ENCODE measurements at regions of chr12 and their contacts with region 1.

Region 1: GRCh38 chr12:56104109-56104814 is at the start of gene PA2G4:
- DNase-seq: peak; percentile 98
- ATAC-seq: peak; percentile 95 to 96
- H3K4me3 ChIP-seq: peak within 1 kb of the TSS; percentile 77 to 98 (median 84)
- H3K27ac ChIP-seq: peak within 1 kb of the TSS; percentile 85 to 93 (median 92)
- H3K4me1 ChIP-seq: peaks cover 20 to 26% of the 10 kb centered on the region in 2 donors
- H3K27me3 ChIP-seq: no peaks in the 10 kb centered on the region
- CTCF ChIP-seq: no peak
- POLR2A ChIP-seq: peak; percentile 85 to 96
- total RNA-seq, gene PA2G4: 109 to 204 (median 127) TPM

Region 2: GRCh38 chr12:56041552-56042429 is 62.5 kb before region 1 on chr12 and contains the start of gene RPS26:
- in situ Hi-C with region 1: loop called in 2 of 4 experiments (anchors 10 kb)
- intact Hi-C with region 1: loop called (anchors 2 kb)
- DNase-seq: peak; percentile 96 to 97
- ATAC-seq: peak; percentile 98 to 99
- H3K4me3 ChIP-seq: peak within 1 kb of the TSS; percentile 66 to 94 (median 86)
- H3K27ac ChIP-seq: peak within 1 kb of the TSS; percentile 87 to 98 (median 94)
- H3K4me1 ChIP-seq: peaks cover 15 to 19% of the 10 kb centered on the region in 2 donors
- H3K27me3 ChIP-seq: no peaks in the 10 kb centered on the region
- CTCF ChIP-seq: peak; percentile 11 to 70 (median 40)
- POLR2A ChIP-seq: peak; percentile 86 to 90
- total RNA-seq, gene RPS26: 618 to 1,648 (median 1,209) TPM

Region 3: DNA sequence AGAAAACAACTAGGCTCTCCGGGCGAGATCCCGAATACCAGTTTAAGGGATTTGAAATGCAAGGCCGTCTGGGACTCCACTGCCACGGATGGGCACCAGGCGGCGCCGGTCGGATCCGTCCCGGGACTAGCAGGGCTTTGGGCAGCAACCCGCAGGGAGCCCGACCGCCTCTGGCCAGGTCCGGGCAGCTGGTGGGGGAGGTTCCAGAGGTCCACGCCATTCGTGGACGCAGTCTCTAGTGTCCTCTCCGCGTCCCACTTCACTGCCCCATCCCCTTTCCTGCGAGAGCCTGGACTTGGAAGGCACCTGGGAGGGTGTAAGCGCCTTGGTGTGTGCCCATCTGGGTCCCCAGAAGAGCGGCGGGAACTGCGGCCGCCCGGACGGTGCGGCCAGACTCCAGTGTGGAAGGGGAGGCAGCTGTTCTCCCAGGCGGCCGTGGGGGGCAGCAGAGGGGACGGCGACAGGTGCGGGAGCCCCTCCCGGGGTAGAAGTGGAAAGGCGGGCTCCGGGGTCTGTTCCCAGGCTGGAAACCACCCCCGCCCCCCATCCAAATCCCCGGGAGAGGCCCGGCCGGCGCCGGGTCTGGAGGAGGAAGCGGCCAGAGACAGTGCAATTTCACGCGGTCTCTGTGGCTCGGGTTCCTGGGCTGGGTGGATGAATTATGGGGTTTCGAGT is 25.1 kb before region 1 on chr12:
- in situ Hi-C with region 1: no loop called
- intact Hi-C with region 1: loop called (anchors 2 kb)
- DNase-seq: peak; percentile 55 to 79
- ATAC-seq: peak; percentile 76 to 86
- H3K4me3 ChIP-seq: peak overlapping the region; percentile 54 to 62 (median 58)
- H3K27ac ChIP-seq: peak overlapping the region; percentile 21 to 59 (median 39)
- H3K4me1 ChIP-seq: peaks cover 3 to 19% of the 10 kb centered on the region in 2 donors
- H3K27me3 ChIP-seq: peaks cover 10 to 24% (median 12%) of the 10 kb centered on the region in 3 donors
- CTCF ChIP-seq: peak; percentile 53 to 74 (median 64)
- POLR2A ChIP-seq: peak in 1 of 2 donors; percentile 23

Region 4: DNA sequence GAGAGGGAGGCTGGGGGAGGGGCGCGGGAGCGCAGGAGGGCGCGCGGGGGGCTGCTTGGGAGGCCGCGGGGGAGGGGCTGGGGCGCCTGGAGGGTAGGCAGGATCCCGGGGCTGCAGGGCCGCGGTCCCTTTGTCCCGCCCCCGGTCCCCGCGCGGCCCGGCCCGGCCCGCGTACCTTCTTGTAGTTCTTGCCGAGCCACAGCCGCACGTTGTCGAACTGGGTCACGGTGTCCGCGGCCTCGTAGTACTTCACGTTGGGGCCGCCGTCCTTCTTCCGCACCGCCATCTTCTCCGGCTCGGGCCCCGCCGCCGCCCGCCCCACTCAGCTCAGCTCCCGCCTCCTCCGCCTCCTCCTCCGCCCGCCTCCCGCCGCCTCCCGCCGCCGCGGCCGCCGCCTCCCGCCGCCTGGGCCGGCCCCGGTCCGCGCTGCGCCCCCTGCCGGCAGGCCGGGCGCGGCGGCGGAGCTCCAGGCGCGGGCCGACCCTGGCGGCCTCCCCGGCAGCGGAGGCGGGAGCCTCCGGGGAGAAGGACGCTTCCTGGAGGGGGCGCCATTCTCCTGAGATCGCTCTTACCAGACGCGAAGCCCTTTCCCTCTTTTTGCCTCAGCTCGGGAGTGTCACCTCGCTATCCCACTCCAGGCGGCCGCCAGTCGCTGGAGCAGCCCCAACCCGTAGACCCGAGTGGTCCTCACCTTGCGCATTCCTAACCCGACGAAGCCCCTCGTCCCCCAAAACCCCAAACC is 85.1 kb after region 1 on chr12 and contains the start of gene SMARCC2:
- in situ Hi-C with region 1: no loop called
- intact Hi-C with region 1: no loop called
- DNase-seq: peak; percentile 77 to 88
- ATAC-seq: peak; percentile 90
- H3K4me3 ChIP-seq: peak within 1 kb of the TSS; percentile 76 to 90 (median 82)
- H3K27ac ChIP-seq: peak within 1 kb of the TSS; percentile 89 to 94 (median 94)
- H3K4me1 ChIP-seq: peaks cover 16 to 28% of the 10 kb centered on the region in 2 donors
- H3K27me3 ChIP-seq: no peaks in the 10 kb centered on the region
- CTCF ChIP-seq: peak; percentile 74 to 88 (median 84)
- POLR2A ChIP-seq: peak; percentile 20 to 41
- total RNA-seq, gene SMARCC2: 34.1 to 56.9 (median 49.4) TPM

Region 5: DNA sequence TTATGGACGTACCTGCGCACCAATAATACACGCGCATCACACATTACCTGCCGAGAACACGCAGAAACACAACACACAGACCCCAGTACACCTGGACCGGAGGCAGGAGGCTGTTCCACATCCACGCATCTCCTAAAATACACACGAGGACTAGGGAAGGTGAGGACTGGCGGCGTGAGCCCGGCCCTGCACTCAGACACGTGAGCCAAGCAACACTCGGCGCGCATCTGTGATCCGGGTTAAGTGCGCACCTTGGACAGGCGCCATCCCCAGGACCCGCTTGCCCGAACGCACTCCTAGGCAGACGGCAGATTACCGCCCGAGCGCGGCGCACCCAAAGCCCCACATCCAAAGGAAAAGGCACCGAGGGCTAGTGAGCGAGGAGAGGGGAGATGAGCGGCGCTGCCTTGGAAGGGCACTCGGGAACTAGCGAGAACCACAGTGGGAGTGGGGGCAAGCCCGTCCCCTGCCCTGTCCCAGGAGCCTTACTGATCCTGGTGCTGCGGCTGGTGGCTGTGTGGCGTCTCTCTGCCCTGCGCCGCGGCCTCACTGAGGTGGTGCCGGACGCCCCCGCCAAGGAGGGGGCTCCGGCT is 383.3 kb after region 1 on chr12:
- in situ Hi-C with region 1: no loop called
- intact Hi-C with region 1: no loop called
- DNase-seq: no peak
- ATAC-seq: peak; percentile 28 to 31
- H3K4me3 ChIP-seq: peak overlapping the region; percentile 62 to 74 (median 69)
- H3K27ac ChIP-seq: no peak overlapping the region
- H3K4me1 ChIP-seq: peaks cover 5 to 18% of the 10 kb centered on the region in 2 donors
- H3K27me3 ChIP-seq: peaks cover 16 to 34% (median 28%) of the 10 kb centered on the region in 3 donors
- CTCF ChIP-seq: no peak
- POLR2A ChIP-seq: no peak